ENCODE measurements at regions of chr5 and their contacts with region 1.

Region 1: GRCh38 chr5:72244862-72245371 is 75.1 kb downstream of the MRPS27 start:
- DNase-seq: no peak

Region 2: DNA sequence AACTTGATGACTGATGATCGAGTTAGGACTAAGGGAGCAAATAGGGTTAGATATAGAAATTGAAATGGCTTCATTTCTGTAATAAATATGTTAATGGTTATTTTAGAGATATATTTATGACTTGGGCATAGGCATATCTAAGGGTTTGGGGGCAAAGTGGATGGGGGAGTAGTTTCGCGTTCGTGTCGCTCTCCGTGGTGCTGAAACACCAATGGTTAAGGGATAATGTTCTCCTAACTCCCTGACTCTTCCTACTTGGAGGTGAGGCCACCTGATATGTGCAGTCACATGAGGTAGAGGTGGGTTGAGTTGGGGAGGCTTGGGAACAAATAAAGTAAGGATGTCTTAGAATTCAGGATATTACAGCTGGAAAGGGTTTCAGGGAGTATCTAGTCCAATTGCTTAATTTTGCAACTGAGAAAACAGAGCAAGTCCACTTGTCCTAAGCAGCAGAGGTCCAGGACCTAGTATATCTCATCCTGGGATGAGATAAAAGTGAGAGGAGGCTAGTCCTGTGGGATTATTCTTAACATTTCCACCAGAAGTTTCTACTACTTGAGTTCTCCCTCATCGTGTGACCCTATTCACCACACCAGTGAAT is 181.6 kb before region 1 on chr5:
- intact Hi-C with region 1: no loop called
- DNase-seq: no peak

Region 3: DNA sequence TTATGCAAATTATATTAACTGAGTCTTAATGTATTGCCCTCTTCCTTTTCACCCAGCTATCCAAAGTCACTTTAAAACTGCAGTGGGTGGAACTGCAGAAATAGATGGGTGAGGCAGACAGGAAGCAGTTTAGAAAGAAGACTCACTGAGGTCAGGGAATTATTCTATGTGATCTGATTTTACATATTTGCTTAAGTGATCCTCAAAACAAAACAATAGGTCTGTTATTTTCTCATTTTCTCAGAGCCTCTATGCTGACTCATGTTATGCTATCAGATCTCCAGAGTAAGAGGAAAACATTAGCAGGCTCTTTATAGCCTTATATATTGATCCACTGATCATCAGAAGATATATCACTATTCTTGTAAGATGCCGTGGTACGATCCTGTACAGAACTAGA is 11.6 kb after region 1 on chr5:
- intact Hi-C with region 1: no loop called
- DNase-seq: no peak

Region 4: DNA sequence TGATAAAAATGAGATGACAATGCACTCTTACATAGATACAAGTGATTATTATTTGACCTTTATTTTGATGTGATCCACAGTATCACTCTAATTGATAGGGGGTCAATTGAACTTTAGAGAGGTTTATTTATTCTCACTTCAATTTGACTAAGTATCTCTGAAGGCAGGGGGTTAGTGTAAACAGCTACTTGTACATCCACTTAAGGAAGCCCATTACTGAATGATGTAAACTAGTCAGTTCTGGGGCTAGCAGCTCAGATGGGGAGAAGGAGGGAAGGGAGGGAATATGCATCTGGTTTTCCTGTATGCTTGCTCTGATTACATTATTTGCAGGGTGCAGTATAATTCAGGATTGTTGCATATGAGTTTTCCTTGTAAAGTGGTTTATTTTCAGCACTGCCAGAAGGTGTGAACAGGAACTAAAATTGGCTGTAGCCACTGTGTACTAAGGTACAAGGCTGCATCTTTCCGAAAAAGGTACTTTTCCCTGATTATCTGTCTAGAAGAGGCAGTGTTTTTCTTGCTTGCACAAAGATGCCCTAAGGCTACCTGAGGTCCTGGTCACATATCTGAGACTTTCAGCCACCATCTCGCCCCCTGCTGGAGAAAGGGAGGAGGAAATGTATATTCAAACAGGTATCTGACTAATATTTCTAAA is 24.0 kb after region 1 on chr5:
- intact Hi-C with region 1: no loop called
- DNase-seq: no peak

Region 5: DNA sequence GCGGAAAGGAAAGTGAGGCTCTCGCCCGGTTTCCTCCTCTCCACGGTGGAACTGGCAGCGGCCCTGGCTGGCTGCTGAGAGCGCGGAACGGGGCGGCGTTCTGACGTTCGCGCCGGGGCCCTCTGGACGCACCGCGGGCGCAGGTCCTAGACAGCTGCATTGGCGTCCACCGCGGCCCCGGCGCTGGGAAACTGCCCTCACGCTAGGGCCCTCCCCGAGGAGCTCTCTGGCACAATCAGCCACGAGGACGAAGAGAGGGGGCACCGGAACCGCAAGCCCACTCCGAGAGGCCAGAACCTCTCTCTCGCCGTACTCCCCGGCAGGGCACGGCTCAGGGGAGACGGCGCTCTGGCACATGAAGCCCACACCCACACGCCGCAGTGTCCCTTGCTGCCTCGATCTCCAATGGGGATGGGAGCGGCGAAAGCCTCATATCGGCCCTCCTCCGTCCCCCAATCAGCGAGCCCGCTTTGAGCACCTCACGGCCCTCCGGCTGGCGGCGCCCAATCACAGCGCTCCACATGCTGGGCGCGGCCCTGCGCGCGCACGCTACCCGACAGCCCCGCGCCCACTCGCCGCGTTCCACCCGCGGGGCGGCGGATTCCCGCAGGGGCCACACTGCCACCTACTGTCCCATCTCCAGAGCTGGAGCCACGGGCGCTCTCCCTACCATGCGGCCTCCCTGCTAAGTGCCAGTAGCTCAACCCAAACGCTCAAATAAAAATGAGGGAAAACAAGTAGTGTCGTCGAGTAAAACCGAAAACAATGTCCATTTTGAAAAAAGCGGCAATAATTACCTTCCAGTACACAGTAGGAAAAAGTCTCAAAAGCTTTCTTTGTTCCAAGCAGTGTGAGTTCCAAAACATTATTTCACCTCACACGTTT is 63.3 kb after region 1 on chr5:
- intact Hi-C with region 1: loop called in 1 of 2 experiments (anchors 10 kb)
- DNase-seq: peak; percentile 99

Region 6: DNA sequence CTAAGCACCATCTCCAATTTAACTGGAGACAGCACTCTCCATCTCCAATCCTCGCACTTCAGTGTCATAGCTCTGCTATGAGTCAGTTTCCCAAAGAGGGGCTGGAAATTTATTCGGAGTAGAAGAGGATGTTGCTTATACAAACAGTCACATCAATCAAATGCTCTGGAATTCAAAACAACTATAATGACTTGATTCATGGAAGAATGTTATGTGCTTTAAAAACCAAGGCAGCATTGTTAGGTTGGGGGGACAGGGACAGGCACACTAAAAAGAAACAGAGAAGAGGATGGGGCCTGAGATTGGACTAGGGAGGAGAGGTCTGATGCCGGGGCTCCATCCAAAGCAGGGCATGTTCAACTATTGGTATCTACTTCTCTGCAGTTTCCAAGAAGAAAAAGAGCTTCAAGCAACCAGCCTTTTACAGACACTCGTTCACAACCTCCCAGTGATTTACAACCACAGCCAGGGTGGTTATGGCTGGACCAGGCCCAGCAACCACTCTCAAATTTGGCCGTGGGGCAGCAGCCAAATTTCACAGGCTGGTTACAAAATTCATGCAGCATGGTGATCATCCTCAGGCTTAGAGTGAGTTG is 379.8 kb after region 1 on chr5:
- intact Hi-C with region 1: loop called in 1 of 2 experiments (anchors 5 kb)
- DNase-seq: no peak

Measured in posterior vena cava (tissue), 2 donors.